ENCODE measurements at regions of chrX and their contacts with region 1.

Region 1: DNA sequence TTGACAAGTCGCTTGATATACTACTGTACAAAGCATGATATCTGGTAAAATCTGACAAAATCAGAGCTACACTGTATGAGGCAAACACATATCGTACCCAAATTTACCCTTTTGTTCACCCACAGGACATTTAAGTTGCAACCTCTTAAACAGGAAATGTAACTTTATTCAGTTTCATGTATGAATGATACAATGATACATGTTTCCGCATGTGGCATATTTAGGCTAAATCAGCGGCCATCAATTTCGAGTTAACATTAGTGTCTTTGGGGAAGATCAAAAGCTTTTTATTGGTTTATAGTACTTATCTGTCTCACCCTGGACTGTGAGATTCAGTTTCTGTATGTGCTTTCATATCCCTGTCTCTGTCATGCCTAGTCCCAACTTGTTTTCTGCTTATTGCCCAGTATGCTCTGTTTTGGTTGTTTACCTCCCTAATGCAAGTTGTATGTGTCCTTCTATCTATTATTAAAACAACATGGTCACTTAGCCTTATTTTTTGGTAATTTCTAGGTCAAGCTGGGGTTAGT is 97.3 kb upstream of the HPRT1 start:
- DNase-seq: no peak
- H3K4me3 ChIP-seq: no peak overlapping the region
- H3K27ac ChIP-seq: no peak overlapping the region
- H3K4me1 ChIP-seq: peaks cover 19% of the 10 kb centered on the region; the same call in 1 of the 2 replicates
- H3K27me3 ChIP-seq: no peaks in the 10 kb centered on the region
- CTCF ChIP-seq: no peak

Region 2: DNA sequence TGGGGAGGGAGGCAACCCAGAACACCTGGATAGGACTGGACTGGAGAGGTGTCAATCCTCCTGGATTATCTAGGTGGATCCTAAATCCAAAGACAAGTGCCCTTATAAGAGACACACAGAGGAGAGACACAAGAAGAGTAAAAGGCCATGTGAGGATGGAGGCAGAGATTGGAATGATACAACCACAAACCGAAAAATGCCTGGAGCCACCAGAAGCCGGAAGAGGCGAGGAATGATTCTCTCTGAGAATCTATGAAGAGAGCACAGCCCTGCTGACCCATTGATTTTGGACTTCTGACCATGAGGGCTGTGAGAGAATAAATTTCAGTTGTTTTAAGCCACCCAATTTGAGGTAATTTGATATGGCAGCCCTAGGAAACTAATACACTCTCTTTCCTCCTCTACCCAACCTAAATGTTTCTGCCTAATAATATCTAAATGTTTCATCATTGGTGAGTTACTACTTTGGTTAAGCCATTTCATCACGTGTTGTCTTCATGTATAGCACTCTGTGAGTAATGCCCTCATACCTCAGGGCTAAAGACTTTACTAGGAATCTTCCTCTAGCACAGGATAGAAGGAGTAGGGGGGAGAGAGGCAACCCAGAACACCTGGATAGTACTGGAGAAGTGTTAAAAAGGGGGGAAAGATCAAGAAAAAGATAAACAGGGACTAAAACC is 397.2 kb before region 1 on chrX:
- CTCF ChIA-PET with region 1: no interaction called
- POLR2A ChIA-PET with region 1: interaction called, 11 read pairs
- intact Hi-C with region 1: no loop called
- DNase-seq: no peak
- H3K4me3 ChIP-seq: no peak overlapping the region
- H3K27ac ChIP-seq: no peak overlapping the region
- H3K4me1 ChIP-seq: no peaks in the 10 kb centered on the region
- H3K27me3 ChIP-seq: 0 out of 2 replicates have a peak, but pooled peaks cover 4% of the 10 kb centered on the region
- CTCF ChIP-seq: no peak

Region 3: GRCh38 chrX:134241960-134242619 is 120.5 kb before region 1 on chrX:
- CTCF ChIA-PET with region 1: interaction called, 16 read pairs
- POLR2A ChIA-PET with region 1: no interaction called
- intact Hi-C with region 1: no loop called
- DNase-seq: no peak
- H3K4me3 ChIP-seq: no peak overlapping the region
- H3K27ac ChIP-seq: no peak overlapping the region
- H3K4me1 ChIP-seq: peaks cover 56% of the 10 kb centered on the region
- H3K27me3 ChIP-seq: no peaks in the 10 kb centered on the region
- CTCF ChIP-seq: no peak

Measured in PC-9 (cell line).